ENCODE measurements at regions of chr4 and their contacts with region 1.

Region 1: GRCh38 chr4:113684534-113685091 is 76.9 kb downstream of the CAMK2D start:
- DNase-seq: peak; percentile 81

Region 2: DNA sequence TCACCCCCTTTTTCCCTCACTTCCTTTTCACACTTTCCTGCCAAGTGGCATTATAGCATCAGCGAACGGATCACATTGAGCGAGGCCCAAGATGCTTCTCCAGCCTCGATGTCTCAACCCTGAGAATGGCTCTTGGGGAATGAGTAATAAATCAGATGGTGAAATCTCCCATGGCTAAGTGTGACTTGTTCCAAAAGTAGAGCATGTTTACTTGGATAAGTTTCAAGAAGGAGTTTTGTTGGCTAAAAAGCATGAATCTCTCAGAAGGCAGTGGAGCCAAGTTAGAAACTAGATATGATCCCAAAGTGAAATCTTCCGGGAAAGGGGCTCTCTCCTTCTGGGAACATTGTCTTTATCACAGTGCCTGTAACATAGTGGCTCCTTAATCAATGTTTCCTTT is 239.3 kb before region 1 on chr4:
- intact Hi-C with region 1: loop called (anchors 5 kb)
- DNase-seq: no peak

Region 3: GRCh38 chr4:113555868-113556267 is 128.7 kb before region 1 on chr4:
- intact Hi-C with region 1: loop called (anchors 5 kb)
- DNase-seq: no peak

Region 4: GRCh38 chr4:113958766-113959538 is 274.3 kb after region 1 on chr4:
- intact Hi-C with region 1: no loop called
- DNase-seq: no peak